Esophagus muscularis mucosa (tissue), 4 donors: ENCODE measurements at regions of chr7 and their contacts with region 1.

Region 1: DNA sequence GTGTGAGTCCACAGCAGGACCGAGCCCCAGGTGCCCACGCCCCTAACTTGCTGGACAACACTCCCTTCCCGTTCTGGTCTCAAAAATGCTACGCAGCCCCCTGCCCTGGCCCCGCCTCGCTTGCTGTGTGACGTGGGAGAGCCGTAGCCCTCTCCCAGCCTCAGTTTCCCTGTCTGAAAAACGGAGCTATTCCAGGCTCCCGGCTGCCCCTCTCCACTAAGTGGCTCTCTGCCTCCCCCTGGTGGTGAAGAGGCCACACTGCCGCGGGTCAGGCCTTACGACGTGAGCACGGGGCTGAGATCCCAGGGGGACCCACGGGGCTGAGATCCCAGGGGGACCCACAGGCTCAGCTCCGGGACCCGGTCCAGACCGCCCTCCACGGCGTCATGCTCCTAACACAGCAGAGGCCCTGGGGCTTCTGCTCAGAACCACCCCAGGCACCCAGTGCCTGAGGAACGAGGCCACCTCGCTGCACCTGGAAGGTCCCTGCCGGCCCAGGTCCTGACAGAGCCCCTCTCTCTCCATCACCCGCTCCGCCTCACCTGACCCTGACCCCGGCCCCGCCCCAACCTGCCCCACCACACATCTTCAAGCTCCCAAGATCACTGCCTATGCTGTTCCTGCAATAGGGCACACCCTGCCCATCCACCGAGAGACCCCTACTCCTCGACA is 26.7 kb downstream of the MICALL2 start:
- DNase-seq: no peak
- H3K4me3 ChIP-seq: no peak overlapping the region
- H3K27ac ChIP-seq: no peak overlapping the region
- H3K4me1 ChIP-seq: peaks cover 0 to 22% (median 5%) of the 10 kb centered on the region in 4 donors
- H3K27me3 ChIP-seq: peaks cover 0 to 53% (median 6%) of the 10 kb centered on the region in 4 donors
- CTCF ChIP-seq: peak in 2 of 3 experiments; percentile 88 to 94
- EP300 ChIP-seq: no peak
- POLR2A ChIP-seq: no peak

Region 2: DNA sequence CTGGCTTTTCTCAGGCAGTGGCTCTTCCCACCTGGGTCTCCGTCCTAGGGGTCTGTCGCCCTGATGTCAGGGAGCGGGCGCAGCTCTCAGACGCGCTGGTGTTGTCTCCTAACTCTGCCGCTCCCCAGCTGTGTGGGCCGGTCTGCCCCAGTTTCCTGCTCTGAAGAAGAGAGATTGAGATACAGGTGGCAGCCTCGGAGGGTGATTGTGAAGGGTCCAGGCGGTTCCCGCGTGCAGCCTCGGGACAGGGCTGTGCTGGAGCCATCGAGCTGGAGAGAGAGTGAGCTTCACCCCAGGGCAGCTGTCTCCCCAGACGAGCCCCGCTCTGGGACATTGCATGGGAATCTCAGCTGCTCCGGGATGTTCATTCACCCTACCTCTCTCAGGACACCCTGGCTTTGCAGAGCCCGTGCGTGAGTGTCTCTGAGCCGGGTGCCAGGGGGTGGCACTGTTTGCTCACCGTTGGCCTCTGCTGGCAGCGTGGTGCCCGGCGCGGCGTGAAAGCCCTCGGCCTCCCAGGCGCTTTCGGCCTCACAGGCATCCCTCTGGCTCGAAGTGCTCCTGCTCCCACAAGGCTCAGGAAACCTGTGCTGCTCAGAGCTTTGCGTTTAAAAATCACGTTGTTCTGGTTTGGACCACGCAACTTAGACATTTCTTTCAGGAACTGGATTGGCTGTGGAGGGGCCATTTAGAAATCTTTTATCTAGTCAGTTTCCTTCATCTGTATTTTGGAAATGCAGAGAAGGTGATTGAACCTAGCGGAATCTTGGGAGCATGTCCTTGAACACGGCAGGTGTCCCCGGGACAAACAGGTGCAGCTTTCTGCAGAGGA is 238.7 kb before region 1 on chr7:
- intact Hi-C with region 1: loop called (anchors 10 kb)
- DNase-seq: no peak
- H3K4me3 ChIP-seq: no peak overlapping the region
- H3K27ac ChIP-seq: no peak overlapping the region
- H3K4me1 ChIP-seq: peaks cover 0 to 16% (median 11%) of the 10 kb centered on the region in 4 donors
- H3K27me3 ChIP-seq: peaks cover 0 to 70% (median 10%) of the 10 kb centered on the region in 4 donors
- CTCF ChIP-seq: peak; percentile 34 to 58 (median 54)
- EP300 ChIP-seq: no peak
- POLR2A ChIP-seq: no peak

Region 3: GRCh38 chr7:1412322-1413261 is 20.0 kb before region 1 on chr7:
- intact Hi-C with region 1: no loop called
- DNase-seq: no peak
- H3K4me3 ChIP-seq: peak overlapping the region in 2 of 4 donors; percentile 12 to 30
- H3K27ac ChIP-seq: no peak overlapping the region
- H3K4me1 ChIP-seq: peaks cover 7 to 15% (median 13%) of the 10 kb centered on the region in 4 donors
- H3K27me3 ChIP-seq: peaks cover 0 to 98% (median 23%) of the 10 kb centered on the region in 4 donors
- CTCF ChIP-seq: peak; percentile 74 to 84 (median 78)
- EP300 ChIP-seq: no peak
- POLR2A ChIP-seq: no peak

Region 4: GRCh38 chr7:1473864-1474512 is 41.4 kb after region 1 on chr7:
- intact Hi-C with region 1: loop called (anchors 2 kb)
- DNase-seq: peak; percentile 96
- H3K4me3 ChIP-seq: no peak overlapping the region
- H3K27ac ChIP-seq: no peak overlapping the region
- H3K4me1 ChIP-seq: peaks cover 6 to 13% (median 12%) of the 10 kb centered on the region in 4 donors
- H3K27me3 ChIP-seq: no peaks in the 10 kb centered on the region
- CTCF ChIP-seq: peak; percentile 87 to 94 (median 87)
- EP300 ChIP-seq: no peak
- POLR2A ChIP-seq: no peak